SK-N-SH (cell line): ENCODE measurements at regions of chr12 and their contacts with region 1.

Region 1: GRCh38 chr12:53476769-53477209 is 22.5 kb downstream of the MAP3K12 start:
- DNase-seq: peak; percentile 67
- H3K4me3 ChIP-seq: no peak overlapping the region
- H3K27ac ChIP-seq: peak overlapping the region; percentile 7 to 21; a peak in 3 of 4 replicates
- H3K4me1 ChIP-seq: peaks cover 2 to 5% of the 10 kb centered on the region in 2 experiments; a peak in 2 of 4 replicates
- H3K27me3 ChIP-seq: no peaks in the 10 kb centered on the region
- CTCF ChIP-seq: peak; percentile 58
- EP300 ChIP-seq: no peak
- RAD21 ChIP-seq: peak; percentile 34; the same call in 1 of the 2 replicates

Region 2: DNA sequence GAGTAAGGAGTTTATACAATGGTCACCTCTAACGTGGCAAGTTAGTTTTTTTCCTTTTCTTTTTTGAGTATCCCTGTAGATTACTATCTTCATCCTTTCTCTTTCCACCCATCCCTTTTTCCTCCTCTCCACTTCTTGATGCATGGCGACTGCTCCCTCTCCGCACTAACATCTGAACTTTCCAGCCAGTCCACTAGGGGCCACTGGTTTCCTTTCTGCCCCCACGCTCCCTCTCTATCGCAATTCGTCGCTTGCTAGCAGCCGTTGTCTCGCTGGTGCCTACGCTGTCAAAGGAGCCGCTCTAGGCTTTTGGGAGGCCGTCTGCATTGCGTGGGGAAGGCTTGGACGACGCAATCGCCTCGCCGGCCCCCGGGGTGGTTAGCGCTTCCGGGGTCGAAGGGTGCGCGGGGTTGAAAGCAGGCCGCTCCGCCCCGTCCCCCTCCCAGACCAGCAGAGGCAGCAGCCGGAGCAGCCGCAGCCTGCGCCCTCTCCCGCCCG is 25.1 kb before region 1 on chr12 and contains the start of gene PCBP2:
- CTCF ChIA-PET with region 1: interaction called, 9 read pairs
- POLR2A ChIA-PET with region 1: interaction called, 10 read pairs
- DNase-seq: peak; percentile 96
- H3K4me3 ChIP-seq: peak within 1 kb of the TSS; percentile 68 to 83
- H3K27ac ChIP-seq: peak within 1 kb of the TSS; percentile 95 to 96
- H3K4me1 ChIP-seq: peaks cover 10 to 13% of the 10 kb centered on the region in 2 experiments; a peak in 3 of 4 replicates
- H3K27me3 ChIP-seq: no peaks in the 10 kb centered on the region
- CTCF ChIP-seq: peak; percentile 85
- EP300 ChIP-seq: 0 out of 4 replicates have a peak, but pooled peaks have one; percentile 4 to 17
- RAD21 ChIP-seq: no peak
- polyA plus RNA-seq, gene PCBP2: 336 and 368 TPM in 2 replicates

Region 3: GRCh38 chr12:53465679-53466078 is 11.1 kb before region 1 on chr12:
- CTCF ChIA-PET with region 1: interaction called, 16 read pairs
- POLR2A ChIA-PET with region 1: interaction called, 6 read pairs
- DNase-seq: no peak
- H3K4me3 ChIP-seq: no peak overlapping the region
- H3K27ac ChIP-seq: no peak overlapping the region; a peak in 1 of 4 replicates
- H3K4me1 ChIP-seq: peaks cover 0 to 4% of the 10 kb centered on the region in 2 experiments; a peak in 1 of 4 replicates
- H3K27me3 ChIP-seq: no peaks in the 10 kb centered on the region
- CTCF ChIP-seq: no peak
- EP300 ChIP-seq: no peak
- RAD21 ChIP-seq: no peak

Region 4: GRCh38 chr12:53500776-53501614 is 24.2 kb after region 1 on chr12 and contains the start of gene TARBP2:
- CTCF ChIA-PET with region 1: interaction called, 9 read pairs
- POLR2A ChIA-PET with region 1: interaction called, 16 read pairs
- DNase-seq: peak; percentile 92
- H3K4me3 ChIP-seq: peak within 1 kb of the TSS; percentile 52 to 75
- H3K27ac ChIP-seq: peak within 1 kb of the TSS; percentile 94 to 100
- H3K4me1 ChIP-seq: peaks cover 33 to 37% of the 10 kb centered on the region in 2 experiments
- H3K27me3 ChIP-seq: no peaks in the 10 kb centered on the region
- CTCF ChIP-seq: no peak
- EP300 ChIP-seq: no peak
- RAD21 ChIP-seq: no peak
- polyA plus RNA-seq, gene TARBP2: 57.8 and 69.8 TPM in 2 replicates

Region 5: DNA sequence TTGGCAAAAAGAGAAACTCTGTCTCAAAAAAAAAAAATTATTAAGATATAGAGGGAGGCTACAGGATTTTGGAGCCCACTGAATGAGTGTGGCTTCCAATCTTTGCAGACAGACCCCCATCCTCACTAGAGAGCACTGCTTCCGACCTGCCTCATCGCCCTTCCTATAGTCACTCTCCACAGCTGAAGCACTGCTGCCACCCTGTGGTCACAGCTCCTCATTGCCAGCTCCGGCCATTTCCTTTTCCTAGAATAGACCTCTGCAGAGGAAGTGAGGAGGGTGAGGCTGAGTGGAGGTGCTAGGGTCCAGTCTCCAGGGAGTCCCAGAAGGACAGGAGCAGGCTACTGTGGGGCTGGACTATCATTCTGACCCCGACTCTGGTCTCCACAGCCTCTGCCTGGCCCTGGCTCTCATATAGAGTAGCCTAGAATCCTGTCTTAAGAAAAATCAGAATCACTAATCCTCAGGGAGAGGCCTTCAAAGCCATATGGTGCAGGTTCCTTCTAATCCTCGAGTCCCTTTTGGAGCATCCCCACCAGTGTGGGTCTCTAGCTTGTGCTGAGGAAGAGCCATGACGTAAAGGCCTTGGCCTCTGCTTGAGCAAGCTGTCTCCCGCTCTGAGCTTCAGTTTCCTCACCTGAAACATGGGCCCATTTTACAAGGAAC is 31.9 kb after region 1 on chr12:
- CTCF ChIA-PET with region 1: interaction called, 25 read pairs
- POLR2A ChIA-PET with region 1: interaction called, 12 read pairs
- DNase-seq: peak; percentile 84
- H3K4me3 ChIP-seq: peak overlapping the region in 1 of 2 experiments; percentile 21; a peak in 1 of 4 replicates
- H3K27ac ChIP-seq: peak overlapping the region in 1 of 2 experiments; percentile 31; a peak in 1 of 4 replicates
- H3K4me1 ChIP-seq: peaks cover 0 to 12% of the 10 kb centered on the region in 2 experiments; a peak in 3 of 4 replicates
- H3K27me3 ChIP-seq: no peaks in the 10 kb centered on the region
- CTCF ChIP-seq: peak; percentile 93
- EP300 ChIP-seq: no peak
- RAD21 ChIP-seq: peak; percentile 97

Region 6: DNA sequence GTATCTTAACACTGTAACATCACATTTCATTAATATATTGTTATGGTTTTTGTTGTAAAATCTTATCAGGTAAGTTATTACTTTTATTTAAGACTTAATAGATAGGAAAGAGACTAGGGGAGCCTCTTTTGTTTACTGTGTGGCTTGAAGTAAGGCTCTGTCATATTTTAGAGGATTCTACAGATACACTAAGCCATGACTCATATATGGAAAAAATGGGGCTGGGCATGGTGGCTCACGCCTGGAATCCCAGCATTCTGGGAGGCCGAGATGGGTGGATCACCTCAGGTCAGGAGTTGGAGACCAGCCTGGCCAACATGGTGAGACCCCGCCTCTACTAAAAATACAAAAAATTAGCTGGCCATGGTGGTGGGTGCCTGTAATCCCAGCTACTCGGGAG is 54.1 kb after region 1 on chr12:
- CTCF ChIA-PET with region 1: no interaction called
- POLR2A ChIA-PET with region 1: no interaction called
- DNase-seq: no peak
- H3K4me3 ChIP-seq: no peak overlapping the region
- H3K27ac ChIP-seq: no peak overlapping the region
- H3K4me1 ChIP-seq: no peaks in the 10 kb centered on the region
- H3K27me3 ChIP-seq: no peaks in the 10 kb centered on the region
- CTCF ChIP-seq: no peak
- EP300 ChIP-seq: no peak
- RAD21 ChIP-seq: no peak